Natural killer cell (primary cell): ENCODE measurements at regions of chrX and their contacts with region 1.

Region 1: GRCh38 chrX:48574270-48575266 is at the start of gene RBM3:
- DNase-seq: peak; percentile 80 to 96
- ATAC-seq: peak; percentile 90 to 98 (median 92)
- H3K4me3 ChIP-seq: peak within 1 kb of the TSS; percentile 82
- H3K4me3 Mint-ChIP-seq: peak within 1 kb of the TSS; percentile 94
- H3K27ac ChIP-seq: peak within 1 kb of the TSS; percentile 99
- H3K27ac Mint-ChIP-seq: peak within 1 kb of the TSS; percentile 99 to 100
- H3K4me1 ChIP-seq: peaks cover 23% of the 10 kb centered on the region
- H3K4me1 Mint-ChIP-seq: peaks cover 9 to 22% of the 10 kb centered on the region in 2 donors
- H3K27me3 ChIP-seq: no peaks in the 10 kb centered on the region
- H3K27me3 Mint-ChIP-seq: no peaks in the 10 kb centered on the region
- CTCF ChIP-seq: peak; percentile 35
- total RNA-seq, gene RBM3: 356 to 419 (median 366) TPM

Region 2: DNA sequence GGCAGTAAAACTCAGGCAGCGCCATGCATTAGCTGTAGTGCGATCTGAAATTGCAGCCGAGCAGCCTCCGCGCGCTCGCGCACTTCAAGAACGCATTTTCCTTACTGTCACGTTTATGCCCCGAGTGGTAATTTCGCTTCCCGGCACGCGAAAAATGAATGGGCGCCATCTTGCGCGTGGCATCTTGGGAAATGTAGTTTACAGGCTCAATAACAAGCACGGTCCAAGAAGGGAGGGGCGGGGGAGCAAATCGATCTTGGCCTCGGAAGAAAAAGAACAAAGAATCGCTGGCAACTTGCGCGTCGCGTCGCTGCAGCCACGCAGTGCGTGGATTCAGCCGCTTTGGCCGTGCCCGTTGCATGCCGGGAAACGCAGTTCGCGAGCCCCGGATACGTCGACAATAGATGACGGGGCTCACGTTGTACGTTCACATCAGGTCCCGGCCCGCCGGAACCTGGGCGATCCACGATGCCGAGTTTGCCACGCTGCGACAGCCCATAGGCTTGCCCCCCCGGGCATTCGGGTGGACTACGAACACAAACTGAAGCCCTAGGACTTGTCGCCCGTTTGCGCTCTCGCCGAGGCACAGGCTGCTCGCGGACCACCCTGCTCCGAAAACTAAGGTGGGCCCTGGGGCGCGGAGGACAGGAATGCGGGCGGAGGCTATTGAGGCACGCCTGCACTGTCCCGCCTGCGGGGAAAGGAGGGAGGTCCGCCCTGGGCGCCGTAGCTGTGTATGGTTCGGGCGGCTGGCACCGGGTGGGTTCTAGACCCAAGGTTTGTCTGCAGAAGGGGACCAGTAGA is 98.6 kb before region 1 on chrX and contains the start of gene FTSJ1:
- intact Hi-C with region 1: loop called (anchors 2 kb)
- DNase-seq: peak; percentile 73 to 95
- ATAC-seq: peak; percentile 91 to 95 (median 93)
- H3K4me3 ChIP-seq: peak within 1 kb of the TSS; percentile 88
- H3K4me3 Mint-ChIP-seq: peak within 1 kb of the TSS; percentile 81
- H3K27ac ChIP-seq: peak within 1 kb of the TSS; percentile 81
- H3K27ac Mint-ChIP-seq: peak within 1 kb of the TSS; percentile 85 to 96
- H3K4me1 ChIP-seq: peaks cover 18% of the 10 kb centered on the region
- H3K4me1 Mint-ChIP-seq: peaks cover 14 to 48% of the 10 kb centered on the region in 2 donors
- H3K27me3 ChIP-seq: no peaks in the 10 kb centered on the region
- H3K27me3 Mint-ChIP-seq: no peaks in the 10 kb centered on the region
- CTCF ChIP-seq: no peak
- total RNA-seq, gene FTSJ1: 62.4 to 75.3 (median 67.3) TPM

Region 3: GRCh38 chrX:48539345-48540027 is 35.1 kb before region 1 on chrX and contains the start of gene TBC1D25:
- intact Hi-C with region 1: loop called (anchors 1 kb)
- DNase-seq: peak; percentile 91 to 97
- ATAC-seq: peak; percentile 83 to 96 (median 87)
- H3K4me3 ChIP-seq: peak within 1 kb of the TSS; percentile 92
- H3K4me3 Mint-ChIP-seq: peak within 1 kb of the TSS; percentile 80
- H3K27ac ChIP-seq: peak within 1 kb of the TSS; percentile 100
- H3K27ac Mint-ChIP-seq: peak within 1 kb of the TSS; percentile 77 to 94
- H3K4me1 ChIP-seq: peaks cover 21% of the 10 kb centered on the region
- H3K4me1 Mint-ChIP-seq: peaks cover 17 to 29% of the 10 kb centered on the region in 2 donors
- H3K27me3 ChIP-seq: no peaks in the 10 kb centered on the region
- H3K27me3 Mint-ChIP-seq: no peaks in the 10 kb centered on the region
- CTCF ChIP-seq: peak; percentile 33
- total RNA-seq, gene TBC1D25: 34.9 to 41.8 (median 36.1) TPM

Region 4: DNA sequence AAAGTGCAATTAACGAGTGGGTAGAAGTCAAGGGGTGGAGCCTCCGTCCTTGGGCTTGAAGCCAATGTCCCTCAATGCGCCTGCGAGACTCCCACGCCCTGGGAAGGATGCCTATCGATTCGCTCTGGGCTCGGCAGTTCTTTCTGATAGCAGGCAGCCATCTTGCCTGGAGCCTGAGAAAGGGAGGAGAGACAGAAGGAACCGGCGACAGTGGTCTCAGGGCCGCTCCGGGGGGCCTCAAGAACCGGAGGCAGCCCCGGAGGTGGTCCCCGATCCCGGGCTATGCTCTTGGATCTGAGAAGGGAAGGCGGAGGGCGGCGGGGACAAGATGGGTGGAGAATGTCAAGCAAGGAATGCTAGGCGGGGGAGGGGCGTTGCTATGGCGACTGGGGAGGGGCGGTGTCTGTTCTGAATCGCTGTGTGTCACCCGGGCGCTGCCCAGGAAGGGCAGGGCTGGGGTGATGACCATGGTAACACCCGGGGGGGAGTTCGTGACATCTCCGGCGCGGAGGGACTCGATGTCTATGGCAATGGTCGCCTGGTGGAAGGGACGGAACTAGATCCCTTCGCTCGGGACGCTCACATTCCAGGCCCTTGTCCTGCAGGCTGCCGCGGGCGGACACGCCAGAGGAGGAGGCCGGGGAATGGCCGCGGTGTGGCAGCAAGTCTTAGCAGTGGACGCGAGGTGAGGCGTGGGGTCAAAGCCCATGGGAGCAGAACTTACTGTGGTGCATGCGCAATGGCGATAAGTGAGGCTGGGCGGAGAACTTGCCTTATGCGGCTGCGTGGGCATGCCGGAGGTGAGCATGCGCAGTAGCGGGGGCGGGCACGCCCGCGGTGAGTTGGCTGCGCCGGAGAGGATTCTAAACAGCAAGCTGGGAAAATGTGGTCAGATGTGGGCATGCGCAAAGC is 23.0 kb after region 1 on chrX and contains the start of gene WDR13:
- intact Hi-C with region 1: loop called (anchors 1 kb)
- DNase-seq: peak; percentile 83 to 94
- ATAC-seq: peak; percentile 88 to 97 (median 89)
- H3K4me3 ChIP-seq: peak within 1 kb of the TSS; percentile 81
- H3K4me3 Mint-ChIP-seq: peak within 1 kb of the TSS; percentile 95
- H3K27ac ChIP-seq: peak within 1 kb of the TSS; percentile 100
- H3K27ac Mint-ChIP-seq: peak within 1 kb of the TSS; percentile 98 to 99
- H3K4me1 ChIP-seq: peaks cover 15% of the 10 kb centered on the region
- H3K4me1 Mint-ChIP-seq: peaks cover 19% of the 10 kb centered on the region in 2 donors
- H3K27me3 ChIP-seq: no peaks in the 10 kb centered on the region
- H3K27me3 Mint-ChIP-seq: no peaks in the 10 kb centered on the region
- CTCF ChIP-seq: no peak
- total RNA-seq, gene WDR13: 52.5 to 62.9 (median 60.2) TPM

Region 5: GRCh38 chrX:48715876-48716502 is 141.4 kb after region 1 on chrX:
- intact Hi-C with region 1: no loop called
- DNase-seq: peak in 1 of 2 donors; percentile 29
- ATAC-seq: no peak
- H3K4me3 ChIP-seq: no peak overlapping the region
- H3K4me3 Mint-ChIP-seq: peak overlapping the region; percentile 36
- H3K27ac ChIP-seq: peak overlapping the region; percentile 33
- H3K27ac Mint-ChIP-seq: peak overlapping the region; percentile 76 to 97
- H3K4me1 ChIP-seq: peaks cover 61% of the 10 kb centered on the region
- H3K4me1 Mint-ChIP-seq: peaks cover 60 to 78% of the 10 kb centered on the region in 2 donors
- H3K27me3 ChIP-seq: no peaks in the 10 kb centered on the region
- H3K27me3 Mint-ChIP-seq: peaks cover 0 to 11% of the 10 kb centered on the region in 2 donors
- CTCF ChIP-seq: no peak